B cell (primary cell): ENCODE measurements at regions of chr15 and their contacts with region 1.

Region 1: DNA sequence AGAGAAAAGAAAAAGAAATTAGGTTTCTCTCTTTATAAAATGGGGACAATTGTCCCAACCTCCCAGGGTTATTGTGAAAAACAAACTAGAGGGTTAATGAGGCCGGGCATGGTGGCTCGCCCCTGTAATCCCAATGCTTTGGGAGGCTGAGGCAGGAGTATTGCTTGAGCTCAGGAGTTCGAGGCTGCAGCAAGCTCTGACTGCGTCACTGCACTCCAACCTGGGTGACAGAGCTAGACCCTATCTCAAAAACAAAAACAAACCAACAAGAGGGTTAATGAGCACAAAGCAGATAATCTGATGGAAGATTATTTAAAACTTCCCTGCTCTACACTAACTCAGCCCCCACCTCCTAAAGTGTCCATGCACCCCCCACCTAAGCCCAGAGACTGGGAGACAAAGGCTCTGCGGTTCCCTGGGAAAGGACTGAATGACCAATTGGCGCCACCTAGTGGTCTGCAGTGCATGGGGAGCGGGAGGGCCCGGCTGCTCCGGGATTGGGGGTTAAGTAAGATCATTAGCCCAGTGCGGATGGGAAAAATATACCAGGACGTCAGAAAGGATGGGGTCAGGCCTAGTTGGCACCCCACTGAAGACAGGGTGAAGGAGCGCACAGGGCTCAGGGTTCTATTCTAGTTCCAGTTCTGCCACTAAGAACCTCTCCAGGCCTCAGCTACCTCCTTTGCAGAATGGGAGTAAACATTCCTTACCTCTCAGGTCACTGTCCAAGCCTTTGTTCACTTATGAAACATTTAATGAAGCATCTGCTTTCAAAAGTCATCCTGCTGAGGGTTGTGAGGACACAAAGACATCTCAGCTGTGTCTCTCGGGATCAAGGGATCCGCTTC is 15.6 kb downstream of the PIF1 start:
- DNase-seq: peak; percentile 78
- ATAC-seq: peak; percentile 73
- H3K4me3 ChIP-seq: no peak overlapping the region
- H3K4me3 Mint-ChIP-seq: no peak overlapping the region
- H3K27ac ChIP-seq: no peak overlapping the region
- H3K27ac Mint-ChIP-seq: peak overlapping the region; percentile 56
- H3K4me1 ChIP-seq: peaks cover 0 to 11% of the 10 kb centered on the region in 2 donors
- H3K4me1 Mint-ChIP-seq: peaks cover 13% of the 10 kb centered on the region
- H3K27me3 ChIP-seq: no peaks in the 10 kb centered on the region
- H3K27me3 Mint-ChIP-seq: no peaks in the 10 kb centered on the region
- CTCF ChIP-seq: peak; percentile 93

Region 2: DNA sequence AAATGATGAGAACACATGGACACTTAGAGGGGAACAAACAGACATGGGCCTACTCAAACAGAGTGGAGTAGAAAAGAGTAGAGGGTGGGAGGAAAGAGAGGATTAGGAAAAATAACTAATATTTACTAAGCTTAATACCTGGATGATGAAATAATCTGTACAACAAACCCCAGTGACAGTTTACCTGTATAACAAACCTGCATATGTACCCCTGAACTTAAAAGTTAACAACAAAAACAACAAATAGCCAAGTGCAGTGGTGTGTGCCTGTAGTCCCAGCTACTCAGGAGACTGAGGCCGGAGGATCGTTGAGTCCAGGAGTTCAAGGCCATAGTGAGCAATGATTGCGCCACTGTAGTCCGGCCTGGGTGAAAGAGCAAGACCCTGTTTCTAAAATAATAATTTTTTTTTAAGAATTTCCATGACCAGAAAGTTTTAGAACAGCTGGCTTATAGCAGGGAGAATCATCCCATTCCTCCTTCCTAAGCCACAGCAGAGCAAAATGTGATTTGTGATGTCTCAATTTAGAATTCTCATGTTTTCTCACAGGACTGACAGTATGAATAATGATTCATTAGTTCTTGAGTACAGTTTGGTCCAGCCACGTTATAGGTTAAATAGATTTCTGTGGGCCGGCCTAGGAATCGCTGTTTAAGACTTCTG is 199.5 kb before region 1 on chr15:
- CTCF ChIA-PET with region 1: no interaction called
- POLR2A ChIA-PET with region 1: no interaction called
- intact Hi-C with region 1: no loop called
- DNase-seq: no peak
- ATAC-seq: no peak
- H3K4me3 ChIP-seq: no peak overlapping the region
- H3K4me3 Mint-ChIP-seq: no peak overlapping the region
- H3K27ac ChIP-seq: no peak overlapping the region
- H3K27ac Mint-ChIP-seq: no peak overlapping the region
- H3K4me1 ChIP-seq: no peaks in the 10 kb centered on the region
- H3K4me1 Mint-ChIP-seq: peaks cover 8% of the 10 kb centered on the region
- H3K27me3 ChIP-seq: no peaks in the 10 kb centered on the region
- H3K27me3 Mint-ChIP-seq: no peaks in the 10 kb centered on the region
- CTCF ChIP-seq: no peak

Region 3: DNA sequence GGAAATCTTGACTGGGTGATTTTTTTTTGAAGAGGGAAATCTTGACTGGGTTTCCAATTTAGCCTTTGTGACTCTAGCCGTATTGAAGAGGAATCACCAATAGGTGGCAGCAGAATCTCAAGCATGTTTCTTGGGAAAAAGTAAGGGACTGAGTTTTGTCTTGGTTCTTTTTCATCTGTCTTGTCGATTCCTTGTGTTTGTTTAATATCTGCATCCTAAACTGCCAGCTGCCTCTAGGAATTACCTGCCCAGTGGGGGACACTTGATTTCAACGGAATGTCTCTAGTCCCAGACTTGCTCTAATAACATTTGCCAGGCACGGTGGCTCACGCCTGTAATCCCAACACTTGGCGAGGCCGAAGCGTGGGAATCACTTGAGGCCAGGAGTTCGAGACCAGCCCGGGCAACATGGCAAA is 123.6 kb before region 1 on chr15:
- CTCF ChIA-PET with region 1: interaction called, 16 read pairs
- POLR2A ChIA-PET with region 1: no interaction called
- intact Hi-C with region 1: no loop called
- DNase-seq: peak; percentile 68
- ATAC-seq: no peak
- H3K4me3 ChIP-seq: no peak overlapping the region
- H3K4me3 Mint-ChIP-seq: no peak overlapping the region
- H3K27ac ChIP-seq: no peak overlapping the region
- H3K27ac Mint-ChIP-seq: no peak overlapping the region
- H3K4me1 ChIP-seq: no peaks in the 10 kb centered on the region
- H3K4me1 Mint-ChIP-seq: no peaks in the 10 kb centered on the region
- H3K27me3 ChIP-seq: no peaks in the 10 kb centered on the region
- H3K27me3 Mint-ChIP-seq: no peaks in the 10 kb centered on the region
- CTCF ChIP-seq: peak; percentile 78

Region 4: GRCh38 chr15:64754663-64755426 is 55.0 kb before region 1 on chr15:
- CTCF ChIA-PET with region 1: interaction called, 11 read pairs
- POLR2A ChIA-PET with region 1: no interaction called
- intact Hi-C with region 1: no loop called
- DNase-seq: peak; percentile 61
- ATAC-seq: peak; percentile 87
- H3K4me3 ChIP-seq: peak overlapping the region in 4 of 5 experiments; percentile 0 to 51 (median 30)
- H3K4me3 Mint-ChIP-seq: peak overlapping the region; percentile 87
- H3K27ac ChIP-seq: peak overlapping the region; percentile 17 to 65
- H3K27ac Mint-ChIP-seq: peak overlapping the region; percentile 79
- H3K4me1 ChIP-seq: peaks cover 34 to 43% of the 10 kb centered on the region in 2 donors
- H3K4me1 Mint-ChIP-seq: peaks cover 51% of the 10 kb centered on the region
- H3K27me3 ChIP-seq: no peaks in the 10 kb centered on the region
- H3K27me3 Mint-ChIP-seq: no peaks in the 10 kb centered on the region
- CTCF ChIP-seq: no peak

Region 5: GRCh38 chr15:64792282-64792681 is 17.6 kb before region 1 on chr15:
- CTCF ChIA-PET with region 1: interaction called, 10 read pairs
- POLR2A ChIA-PET with region 1: no interaction called
- intact Hi-C with region 1: no loop called
- DNase-seq: no peak
- ATAC-seq: no peak
- H3K4me3 ChIP-seq: no peak overlapping the region
- H3K4me3 Mint-ChIP-seq: no peak overlapping the region
- H3K27ac ChIP-seq: no peak overlapping the region
- H3K27ac Mint-ChIP-seq: no peak overlapping the region
- H3K4me1 ChIP-seq: no peaks in the 10 kb centered on the region
- H3K4me1 Mint-ChIP-seq: no peaks in the 10 kb centered on the region
- H3K27me3 ChIP-seq: no peaks in the 10 kb centered on the region
- H3K27me3 Mint-ChIP-seq: no peaks in the 10 kb centered on the region
- CTCF ChIP-seq: no peak

Region 6: DNA sequence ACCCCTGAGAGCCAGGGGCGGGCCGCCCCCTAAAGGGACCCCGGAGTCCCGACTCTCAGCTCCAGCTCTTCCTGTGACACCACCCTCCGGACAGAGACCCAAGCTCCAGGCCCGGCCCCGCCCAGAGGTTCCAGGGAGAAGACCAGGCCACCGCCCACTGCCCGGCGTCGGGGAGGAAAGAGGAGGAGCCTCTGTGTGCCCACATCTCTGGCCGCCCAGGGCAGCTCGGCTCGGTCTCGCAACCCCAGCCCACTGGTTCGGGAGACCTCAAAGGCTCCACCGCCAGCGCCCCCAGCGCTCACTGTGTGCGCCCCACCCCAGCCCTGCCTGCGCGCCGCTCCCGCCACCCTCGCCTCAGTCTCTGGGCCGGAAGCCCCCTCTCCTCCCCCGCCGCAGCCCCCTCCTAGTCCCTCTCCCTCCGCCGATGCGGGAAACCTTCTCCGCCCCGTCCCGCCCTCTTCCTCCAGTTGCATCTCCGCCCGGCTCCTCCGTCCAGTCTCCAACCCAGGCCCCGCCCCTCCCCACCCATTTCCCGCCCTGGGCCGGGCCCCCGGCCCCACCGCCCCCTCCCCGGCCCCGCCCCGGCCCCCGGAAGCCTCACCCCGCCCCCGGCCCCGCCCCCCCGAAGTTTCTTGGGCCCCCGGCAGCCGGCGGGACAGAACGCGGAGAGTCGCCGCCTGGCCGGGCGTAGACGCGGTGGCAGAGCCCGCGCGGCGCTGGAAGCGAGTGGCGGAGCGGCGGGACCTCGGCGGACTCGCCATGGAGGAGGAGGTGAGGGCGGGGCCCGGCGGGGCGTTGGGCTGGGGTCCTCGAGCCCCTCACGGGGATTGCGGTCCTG is 31.6 kb after region 1 on chr15 and contains the start of gene PLEKHO2:
- CTCF ChIA-PET with region 1: interaction called, 34 read pairs
- POLR2A ChIA-PET with region 1: interaction called, 3 read pairs
- intact Hi-C with region 1: no loop called
- DNase-seq: peak; percentile 90
- ATAC-seq: peak; percentile 76
- H3K4me3 ChIP-seq: peak within 1 kb of the TSS; percentile 67 to 88 (median 72)
- H3K4me3 Mint-ChIP-seq: peak within 1 kb of the TSS; percentile 91
- H3K27ac ChIP-seq: peak within 1 kb of the TSS; percentile 65 to 85
- H3K27ac Mint-ChIP-seq: peak within 1 kb of the TSS; percentile 84
- H3K4me1 ChIP-seq: peaks cover 45 to 53% of the 10 kb centered on the region in 2 donors
- H3K4me1 Mint-ChIP-seq: peaks cover 58% of the 10 kb centered on the region
- H3K27me3 ChIP-seq: no peaks in the 10 kb centered on the region
- H3K27me3 Mint-ChIP-seq: no peaks in the 10 kb centered on the region
- CTCF ChIP-seq: peak; percentile 53
- total RNA-seq, gene PLEKHO2: 23.1 and 25.4 TPM in 2 replicates

Region 7: GRCh38 chr15:64911311-64912191 is 101.7 kb after region 1 on chr15 and contains the start of gene ANKDD1A:
- CTCF ChIA-PET with region 1: interaction called, 58 read pairs
- POLR2A ChIA-PET with region 1: interaction called, 3 read pairs
- intact Hi-C with region 1: no loop called
- DNase-seq: peak; percentile 38
- ATAC-seq: peak; percentile 80
- H3K4me3 ChIP-seq: peak within 1 kb of the TSS in 4 of 5 experiments; percentile 24 to 46 (median 42)
- H3K4me3 Mint-ChIP-seq: peak within 1 kb of the TSS; percentile 71
- H3K27ac ChIP-seq: no peak within 1 kb of the TSS
- H3K27ac Mint-ChIP-seq: no peak within 1 kb of the TSS
- H3K4me1 ChIP-seq: peaks cover 7 to 9% of the 10 kb centered on the region in 2 donors
- H3K4me1 Mint-ChIP-seq: peaks cover 9% of the 10 kb centered on the region
- H3K27me3 ChIP-seq: peaks cover 0 to 19% (median 4%) of the 10 kb centered on the region in 4 experiments
- H3K27me3 Mint-ChIP-seq: peaks cover 8% of the 10 kb centered on the region
- CTCF ChIP-seq: no peak
- total RNA-seq, gene ANKDD1A: 2.2 and 2.6 TPM in 2 replicates